Activated CD4-positive, alpha-beta memory T cell treated with anti-CD3 and anti-CD28 coated beads, Interleukin-2, amount 10 ng/mL, durations not matched to agents 7 days and 5 days (primary cell): ENCODE measurements at regions of chr13 and their contacts with region 1.

Region 1: GRCh38 chr13:95834134-95834765 is 157.3 kb downstream of the DNAJC3 start:
- DNase-seq: peak; percentile 70
- H3K4me3 Mint-ChIP-seq: no peak overlapping the region
- H3K27ac Mint-ChIP-seq: no peak overlapping the region
- H3K4me1 Mint-ChIP-seq: no peaks in the 10 kb centered on the region
- H3K27me3 Mint-ChIP-seq: peaks cover 31% of the 10 kb centered on the region

Region 2: GRCh38 chr13:95536632-95537241 is 297.5 kb before region 1 on chr13:
- CTCF ChIA-PET with region 1: interaction called, 46 read pairs
- POLR2A ChIA-PET with region 1: interaction called, 3 read pairs
- DNase-seq: no peak
- H3K4me3 Mint-ChIP-seq: no peak overlapping the region
- H3K27ac Mint-ChIP-seq: no peak overlapping the region
- H3K4me1 Mint-ChIP-seq: no peaks in the 10 kb centered on the region
- H3K27me3 Mint-ChIP-seq: peaks cover 33% of the 10 kb centered on the region

Region 3: GRCh38 chr13:96003304-96003703 is 169.1 kb after region 1 on chr13:
- CTCF ChIA-PET with region 1: no interaction called
- POLR2A ChIA-PET with region 1: no interaction called
- DNase-seq: no peak
- H3K4me3 Mint-ChIP-seq: no peak overlapping the region
- H3K27ac Mint-ChIP-seq: no peak overlapping the region
- H3K4me1 Mint-ChIP-seq: no peaks in the 10 kb centered on the region
- H3K27me3 Mint-ChIP-seq: no peaks in the 10 kb centered on the region

Region 4: DNA sequence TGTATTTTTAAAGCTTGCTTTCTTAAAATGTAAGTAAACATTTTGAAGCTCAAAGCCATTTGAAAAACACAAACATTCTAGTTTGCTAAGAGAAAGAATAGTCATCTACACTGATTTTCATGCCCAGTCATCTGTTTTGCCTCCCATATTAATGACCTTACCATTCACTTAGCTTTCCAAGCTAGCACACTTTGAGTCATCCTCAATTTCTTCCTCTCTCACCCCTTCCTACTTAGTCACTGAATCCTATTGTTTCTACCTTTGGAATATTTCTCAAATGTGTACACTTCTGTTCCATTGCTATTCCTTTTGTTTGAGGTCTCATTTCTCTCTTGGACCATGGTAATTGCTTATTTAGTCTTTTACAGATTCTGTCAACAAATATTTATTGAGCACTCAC is 248.4 kb after region 1 on chr13:
- CTCF ChIA-PET with region 1: no interaction called
- POLR2A ChIA-PET with region 1: no interaction called
- DNase-seq: no peak
- H3K4me3 Mint-ChIP-seq: no peak overlapping the region
- H3K27ac Mint-ChIP-seq: no peak overlapping the region
- H3K4me1 Mint-ChIP-seq: no peaks in the 10 kb centered on the region
- H3K27me3 Mint-ChIP-seq: peaks cover 2% of the 10 kb centered on the region